ENCODE measurements at regions of chr6 and their contacts with region 1.

Region 1: GRCh38 chr6:156564127-156564806 is 212.9 kb upstream of the ARID1B start:
- DNase-seq: peak; percentile 40
- ATAC-seq: peak; percentile 100
- H3K4me3 ChIP-seq: no peak overlapping the region
- H3K27ac ChIP-seq: no peak overlapping the region
- H3K4me1 ChIP-seq: no peaks in the 10 kb centered on the region
- H3K27me3 ChIP-seq: no peaks in the 10 kb centered on the region
- CTCF ChIP-seq: peak; percentile 85 to 95 (median 93); a peak in 5 of 6 replicates
- POLR2A ChIP-seq: no peak
- RAD21 ChIP-seq: peak; percentile 91

Region 2: DNA sequence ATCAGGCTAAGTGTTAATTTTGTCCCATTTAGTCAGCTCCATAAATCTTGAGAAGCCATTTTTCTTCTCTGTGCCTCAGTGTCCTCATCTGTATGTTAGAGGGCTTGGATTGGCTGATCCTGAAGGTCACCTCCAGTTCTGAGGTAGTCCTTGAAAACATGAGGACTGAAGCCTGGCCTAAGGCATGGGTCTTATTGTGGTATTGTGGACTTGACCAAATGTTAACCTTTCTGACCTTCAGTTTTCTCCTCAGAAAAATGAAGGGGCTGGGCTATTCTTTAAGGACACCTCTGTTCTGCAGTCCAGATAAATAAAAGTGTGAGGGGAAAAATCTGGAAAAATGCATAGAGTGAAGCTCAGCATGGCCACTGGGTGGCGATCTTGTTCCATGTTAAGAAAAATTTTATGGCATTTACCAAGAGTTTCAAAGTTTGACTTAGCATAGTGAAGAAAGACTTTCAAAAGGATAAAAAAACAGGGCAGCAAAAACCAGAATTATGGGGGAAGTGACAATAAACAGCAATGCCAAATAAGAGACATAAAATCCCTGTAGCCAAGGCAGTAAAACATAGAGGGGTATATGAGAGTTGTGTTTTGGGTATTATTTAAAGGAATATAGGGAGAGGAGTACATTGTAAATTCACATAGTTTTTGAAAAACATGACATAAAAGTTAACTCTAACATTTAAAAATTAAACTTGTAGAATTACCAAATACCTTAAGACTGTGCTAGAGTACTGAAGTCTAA is 1236.8 kb before region 1 on chr6:
- CTCF ChIA-PET with region 1: no interaction called
- POLR2A ChIA-PET with region 1: no interaction called
- RAD21 ChIA-PET with region 1: no interaction called
- intact Hi-C with region 1: loop called (anchors 5 kb)
- DNase-seq: peak; percentile 55
- ATAC-seq: peak; percentile 78
- H3K4me3 ChIP-seq: no peak overlapping the region
- H3K27ac ChIP-seq: no peak overlapping the region
- H3K4me1 ChIP-seq: no peaks in the 10 kb centered on the region
- H3K27me3 ChIP-seq: no peaks in the 10 kb centered on the region
- CTCF ChIP-seq: peak; percentile 63 to 85 (median 76); a peak in 5 of 6 replicates
- POLR2A ChIP-seq: no peak
- RAD21 ChIP-seq: peak; percentile 94

Region 3: GRCh38 chr6:155604991-155605390 is 959.3 kb before region 1 on chr6:
- CTCF ChIA-PET with region 1: no interaction called
- POLR2A ChIA-PET with region 1: no interaction called
- RAD21 ChIA-PET with region 1: no interaction called
- intact Hi-C with region 1: no loop called
- DNase-seq: no peak
- ATAC-seq: no peak
- H3K4me3 ChIP-seq: no peak overlapping the region
- H3K27ac ChIP-seq: no peak overlapping the region
- H3K4me1 ChIP-seq: no peaks in the 10 kb centered on the region
- H3K27me3 ChIP-seq: no peaks in the 10 kb centered on the region
- CTCF ChIP-seq: no peak
- POLR2A ChIP-seq: no peak
- RAD21 ChIP-seq: no peak

Region 4: GRCh38 chr6:156533872-156534524 is 30.3 kb before region 1 on chr6:
- CTCF ChIA-PET with region 1: no interaction called
- POLR2A ChIA-PET with region 1: no interaction called
- RAD21 ChIA-PET with region 1: no interaction called
- intact Hi-C with region 1: no loop called
- DNase-seq: no peak
- ATAC-seq: no peak
- H3K4me3 ChIP-seq: no peak overlapping the region
- H3K27ac ChIP-seq: no peak overlapping the region
- H3K4me1 ChIP-seq: no peaks in the 10 kb centered on the region
- H3K27me3 ChIP-seq: no peaks in the 10 kb centered on the region
- CTCF ChIP-seq: no peak
- POLR2A ChIP-seq: no peak
- RAD21 ChIP-seq: no peak

Region 5: GRCh38 chr6:156662025-156662445 is 97.8 kb after region 1 on chr6:
- CTCF ChIA-PET with region 1: no interaction called
- POLR2A ChIA-PET with region 1: no interaction called
- RAD21 ChIA-PET with region 1: no interaction called
- intact Hi-C with region 1: loop called (anchors 1 kb)
- DNase-seq: peak; percentile 73
- ATAC-seq: peak; percentile 100
- H3K4me3 ChIP-seq: peak overlapping the region; percentile 43 to 54
- H3K27ac ChIP-seq: no peak overlapping the region
- H3K4me1 ChIP-seq: peaks cover 0 to 7% of the 10 kb centered on the region in 2 experiments; a peak in 1 of 4 replicates
- H3K27me3 ChIP-seq: no peaks in the 10 kb centered on the region
- CTCF ChIP-seq: peak; percentile 78 to 97 (median 93)
- POLR2A ChIP-seq: no peak
- RAD21 ChIP-seq: peak; percentile 83

Region 6: DNA sequence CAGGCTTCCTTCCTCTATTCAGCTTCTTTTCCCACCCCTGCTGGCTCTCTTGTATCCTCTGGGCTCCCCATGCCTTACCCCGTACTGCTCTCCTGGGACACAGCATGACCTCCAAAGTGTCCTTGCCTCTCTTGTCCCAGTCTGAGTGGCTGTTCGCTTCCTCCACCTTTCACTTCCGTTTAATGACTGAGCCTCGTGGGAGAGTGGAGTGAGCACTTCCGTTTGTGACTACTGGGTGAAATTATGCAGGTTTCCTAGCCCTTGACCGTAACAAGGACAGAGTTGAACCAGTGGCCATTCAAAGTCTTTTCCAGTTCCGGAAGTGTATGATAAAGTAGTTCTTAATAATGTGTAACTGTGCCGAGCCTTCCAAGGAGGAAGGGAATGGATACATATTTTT is 322.1 kb after region 1 on chr6:
- CTCF ChIA-PET with region 1: no interaction called
- POLR2A ChIA-PET with region 1: no interaction called
- RAD21 ChIA-PET with region 1: no interaction called
- intact Hi-C with region 1: loop called (anchors 10 kb)
- DNase-seq: no peak
- ATAC-seq: no peak
- H3K4me3 ChIP-seq: no peak overlapping the region
- H3K27ac ChIP-seq: no peak overlapping the region
- H3K4me1 ChIP-seq: no peaks in the 10 kb centered on the region
- H3K27me3 ChIP-seq: no peaks in the 10 kb centered on the region
- CTCF ChIP-seq: no peak
- POLR2A ChIP-seq: no peak
- RAD21 ChIP-seq: no peak

Region 7: DNA sequence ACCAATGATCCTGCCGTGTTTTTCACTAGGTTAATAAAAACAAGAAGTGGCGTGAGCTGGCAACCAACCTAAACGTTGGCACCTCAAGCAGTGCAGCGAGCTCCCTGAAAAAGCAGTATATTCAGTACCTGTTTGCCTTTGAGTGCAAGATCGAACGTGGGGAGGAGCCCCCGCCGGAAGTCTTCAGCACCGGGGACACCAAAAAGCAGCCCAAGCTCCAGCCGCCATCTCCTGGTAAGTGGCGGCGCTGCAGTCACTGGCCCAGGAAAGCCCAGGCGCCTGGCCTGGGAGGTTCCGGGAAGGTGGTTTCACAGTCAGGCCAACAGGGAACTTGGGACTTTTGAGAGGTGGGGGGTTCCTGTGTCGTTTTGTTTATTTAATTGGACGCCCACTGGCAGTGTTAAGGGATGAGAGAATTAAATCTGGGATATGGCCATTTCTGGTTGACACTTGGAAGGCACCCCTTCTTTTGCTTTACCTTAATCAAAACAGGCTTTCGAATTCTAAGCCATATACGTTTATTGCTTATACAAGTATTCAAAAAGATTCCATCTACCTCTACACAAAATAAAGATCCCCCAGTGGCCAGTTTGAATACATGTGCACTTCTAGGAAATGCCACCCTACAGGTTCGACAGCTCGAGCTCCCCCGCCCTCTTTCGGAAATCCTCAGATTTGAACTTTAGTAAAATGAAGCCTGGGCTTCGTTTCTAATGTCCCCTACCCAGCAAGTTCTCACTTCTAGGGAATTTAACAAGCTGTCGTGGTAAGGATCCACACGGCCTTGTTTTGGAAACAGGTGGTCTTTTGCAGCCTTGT is 620.1 kb after region 1 on chr6:
- CTCF ChIA-PET with region 1: no interaction called
- POLR2A ChIA-PET with region 1: no interaction called
- RAD21 ChIA-PET with region 1: no interaction called
- intact Hi-C with region 1: loop called (anchors 2 kb)
- DNase-seq: peak; percentile 16
- ATAC-seq: peak; percentile 93
- H3K4me3 ChIP-seq: no peak overlapping the region
- H3K27ac ChIP-seq: no peak overlapping the region
- H3K4me1 ChIP-seq: peaks cover 12 to 23% of the 10 kb centered on the region in 2 experiments; a peak in 3 of 4 replicates
- H3K27me3 ChIP-seq: no peaks in the 10 kb centered on the region
- CTCF ChIP-seq: peak; percentile 84 to 94 (median 93)
- POLR2A ChIP-seq: no peak
- RAD21 ChIP-seq: peak; percentile 94

Measured in HCT116 (cell line).